PC-9 (cell line): ENCODE measurements at regions of chr19 and their contacts with region 1.

Region 1: DNA sequence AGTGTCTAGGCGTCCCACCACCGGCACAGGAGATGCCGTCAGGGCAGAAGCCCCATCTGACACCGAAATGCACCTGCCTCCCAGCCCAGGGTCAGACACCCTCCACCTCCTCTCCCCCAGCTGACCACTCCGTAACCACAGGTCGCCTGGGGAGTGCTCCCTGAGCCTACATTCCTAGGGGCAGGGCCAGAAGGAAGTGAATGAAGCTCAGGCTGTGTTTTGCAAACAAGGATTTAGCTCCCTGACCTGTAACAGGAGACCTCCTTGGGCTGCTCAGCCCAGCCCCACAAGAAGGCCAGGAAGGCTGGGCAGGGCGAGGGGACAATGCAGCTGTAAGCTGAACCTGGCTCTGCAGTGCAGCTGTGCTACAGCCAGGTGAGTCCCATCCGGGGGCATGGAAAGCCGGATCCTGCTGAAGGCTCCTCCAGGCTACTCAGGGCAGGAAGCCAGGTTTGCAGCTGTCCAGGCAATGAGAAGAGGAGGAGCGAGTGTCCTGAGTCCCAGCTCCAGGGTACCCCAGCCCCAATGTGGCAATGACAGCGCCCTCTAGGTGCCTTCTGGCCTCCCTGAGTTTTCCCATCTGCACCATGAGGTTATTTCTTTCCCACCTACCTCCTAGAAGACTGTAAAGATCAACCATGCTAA is 42.1 kb downstream of the RHPN2 start:
- DNase-seq: peak; percentile 82 to 93
- H3K4me3 ChIP-seq: no peak overlapping the region
- H3K27ac ChIP-seq: peak overlapping the region; percentile 85
- H3K4me1 ChIP-seq: peaks cover 47% of the 10 kb centered on the region
- H3K27me3 ChIP-seq: no peaks in the 10 kb centered on the region
- CTCF ChIP-seq: peak; percentile 51; the same call in 1 of the 2 replicates

Region 2: GRCh38 chr19:31378404-31378803 is 1644.2 kb before region 1 on chr19:
- CTCF ChIA-PET with region 1: no interaction called
- POLR2A ChIA-PET with region 1: no interaction called
- intact Hi-C with region 1: no loop called
- DNase-seq: no peak
- H3K4me3 ChIP-seq: no peak overlapping the region
- H3K27ac ChIP-seq: no peak overlapping the region
- H3K4me1 ChIP-seq: no peaks in the 10 kb centered on the region
- H3K27me3 ChIP-seq: peaks cover 17% of the 10 kb centered on the region; the same call in 1 of the 2 replicates
- CTCF ChIP-seq: no peak

Region 3: DNA sequence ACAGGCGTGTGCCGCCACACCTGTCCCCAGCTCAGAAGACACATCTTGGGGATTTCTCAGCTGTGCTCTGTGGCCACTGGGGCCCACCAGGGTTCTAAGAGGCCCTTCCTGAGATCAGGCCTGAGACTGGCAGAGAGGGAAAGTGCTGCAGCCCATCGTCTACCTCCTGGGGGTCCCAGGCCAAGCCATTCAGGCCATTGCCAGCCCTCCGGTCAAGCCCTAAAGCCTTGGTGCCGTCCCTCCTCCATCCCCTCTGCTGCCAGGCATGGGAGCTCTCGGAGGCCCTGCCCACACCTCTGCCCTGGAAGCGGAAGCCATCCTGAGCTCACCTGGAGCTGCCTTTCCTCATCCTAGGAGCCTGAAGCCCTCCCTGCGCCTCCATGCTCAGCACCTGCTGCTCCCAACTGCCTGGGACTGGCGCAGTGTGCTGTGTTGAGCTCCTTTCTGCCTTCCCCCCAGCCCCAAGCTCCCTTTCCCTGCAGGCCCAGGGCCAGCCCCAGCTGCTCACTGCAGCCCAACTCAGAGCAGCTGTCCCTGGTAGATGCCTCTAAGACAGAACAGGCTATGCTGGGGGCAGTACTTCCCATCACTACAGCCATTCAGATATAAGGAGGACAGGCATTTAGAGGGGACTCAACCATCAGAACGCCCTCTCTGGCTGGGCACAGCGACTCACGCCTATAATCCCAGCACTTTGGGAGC is 155.9 kb before region 1 on chr19:
- CTCF ChIA-PET with region 1: no interaction called
- POLR2A ChIA-PET with region 1: no interaction called
- intact Hi-C with region 1: no loop called
- DNase-seq: no peak
- H3K4me3 ChIP-seq: no peak overlapping the region
- H3K27ac ChIP-seq: no peak overlapping the region
- H3K4me1 ChIP-seq: no peaks in the 10 kb centered on the region
- H3K27me3 ChIP-seq: no peaks in the 10 kb centered on the region
- CTCF ChIP-seq: no peak

Region 4: DNA sequence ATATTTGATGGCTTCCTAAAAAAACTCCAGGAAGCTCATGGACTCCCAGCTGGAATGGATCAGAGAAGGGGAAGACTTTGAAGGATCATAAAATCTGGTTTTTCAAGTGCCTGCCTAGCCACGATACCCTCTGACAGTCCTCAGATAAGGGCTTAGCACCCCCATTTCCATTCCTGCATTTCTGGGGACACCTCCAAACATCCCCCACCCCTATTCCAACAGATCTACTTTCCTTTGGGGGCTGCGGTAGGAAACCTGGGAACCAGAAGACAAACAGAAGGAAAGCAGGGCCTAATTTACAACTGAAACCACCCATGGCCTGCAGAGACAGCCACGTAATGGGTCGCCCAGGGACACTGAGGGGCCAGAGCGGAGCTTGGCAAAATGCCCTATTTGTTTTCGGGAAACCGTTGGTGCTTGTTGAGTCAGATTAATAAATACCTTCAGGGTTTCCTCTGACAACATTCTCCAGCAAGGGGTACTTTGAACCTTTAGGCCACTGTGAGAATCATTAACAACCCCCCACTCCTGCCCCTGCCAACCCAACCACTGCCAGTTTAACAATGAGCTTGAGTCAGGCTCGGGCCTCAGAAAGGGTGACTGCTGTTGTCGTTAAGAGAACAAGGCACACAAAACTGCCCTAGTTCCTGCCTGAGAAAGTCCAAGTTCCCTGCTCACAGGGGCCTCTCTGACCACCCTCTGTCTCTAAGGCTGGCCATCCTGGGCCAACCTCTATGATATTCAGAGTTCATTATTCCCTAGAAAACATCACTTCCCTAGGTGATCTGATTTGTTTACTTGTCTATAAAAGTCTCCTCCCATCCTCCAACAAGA is 18.6 kb after region 1 on chr19:
- CTCF ChIA-PET with region 1: no interaction called
- POLR2A ChIA-PET with region 1: interaction called, 13 read pairs
- intact Hi-C with region 1: loop called (anchors 2 kb)
- DNase-seq: peak; percentile 86 to 97
- H3K4me3 ChIP-seq: peak overlapping the region; percentile 36; the same call in 1 of the 2 replicates
- H3K27ac ChIP-seq: peak overlapping the region; percentile 98
- H3K4me1 ChIP-seq: peaks cover 62% of the 10 kb centered on the region
- H3K27me3 ChIP-seq: no peaks in the 10 kb centered on the region
- CTCF ChIP-seq: no peak

Region 5: GRCh38 chr19:33047406-33047805 is 24.8 kb after region 1 on chr19:
- CTCF ChIA-PET with region 1: no interaction called
- POLR2A ChIA-PET with region 1: interaction called, 11 read pairs
- intact Hi-C with region 1: loop called (anchors 1 kb)
- DNase-seq: peak; percentile 96 to 99
- H3K4me3 ChIP-seq: peak overlapping the region; percentile 17; the same call in 1 of the 2 replicates
- H3K27ac ChIP-seq: peak overlapping the region; percentile 98
- H3K4me1 ChIP-seq: peaks cover 85% of the 10 kb centered on the region
- H3K27me3 ChIP-seq: no peaks in the 10 kb centered on the region
- CTCF ChIP-seq: no peak

Region 6: DNA sequence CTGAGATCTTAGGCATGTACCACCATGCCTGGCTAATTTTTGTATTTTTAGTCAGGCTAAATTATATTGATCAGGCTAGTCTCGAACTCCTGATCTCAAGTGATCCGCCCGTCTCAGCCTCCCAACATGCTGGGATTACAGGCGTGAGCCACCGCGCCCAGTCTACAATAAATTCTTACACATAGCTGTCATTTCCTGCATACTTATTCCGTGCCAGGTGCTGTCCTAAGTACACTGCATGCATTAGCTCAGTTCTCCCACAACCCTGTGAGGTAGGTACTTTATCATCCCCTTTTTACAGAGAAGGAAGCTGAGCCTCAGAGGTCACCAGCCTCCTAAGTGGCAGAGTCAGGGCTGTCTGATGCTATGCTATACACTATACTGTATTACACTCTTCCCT is 49.3 kb after region 1 on chr19:
- CTCF ChIA-PET with region 1: no interaction called
- POLR2A ChIA-PET with region 1: no interaction called
- intact Hi-C with region 1: loop called (anchors 5 kb)
- DNase-seq: peak in 1 of 2 experiments; percentile 52
- H3K4me3 ChIP-seq: no peak overlapping the region
- H3K27ac ChIP-seq: no peak overlapping the region
- H3K4me1 ChIP-seq: peaks cover 9% of the 10 kb centered on the region
- H3K27me3 ChIP-seq: no peaks in the 10 kb centered on the region
- CTCF ChIP-seq: no peak